Heart left ventricle (tissue), 16 donors: ENCODE measurements at regions of chr2 and their contacts with region 1.

Region 1: GRCh38 chr2:61426267-61426897 is 44.5 kb downstream of the USP34 start:
- DNase-seq: no peak
- ATAC-seq: peak in 3 of 4 donors; percentile 35 to 75 (median 71)
- H3K4me3 ChIP-seq: no peak overlapping the region
- H3K27ac ChIP-seq: no peak overlapping the region
- H3K4me1 ChIP-seq: peaks cover 1 to 64% (median 27%) of the 10 kb centered on the region in 12 donors
- H3K27me3 ChIP-seq: no peaks in the 10 kb centered on the region
- CTCF ChIP-seq: peak in 10 of 12 donors; percentile 13 to 47 (median 33)
- POLR2A ChIP-seq: no peak

Region 2: DNA sequence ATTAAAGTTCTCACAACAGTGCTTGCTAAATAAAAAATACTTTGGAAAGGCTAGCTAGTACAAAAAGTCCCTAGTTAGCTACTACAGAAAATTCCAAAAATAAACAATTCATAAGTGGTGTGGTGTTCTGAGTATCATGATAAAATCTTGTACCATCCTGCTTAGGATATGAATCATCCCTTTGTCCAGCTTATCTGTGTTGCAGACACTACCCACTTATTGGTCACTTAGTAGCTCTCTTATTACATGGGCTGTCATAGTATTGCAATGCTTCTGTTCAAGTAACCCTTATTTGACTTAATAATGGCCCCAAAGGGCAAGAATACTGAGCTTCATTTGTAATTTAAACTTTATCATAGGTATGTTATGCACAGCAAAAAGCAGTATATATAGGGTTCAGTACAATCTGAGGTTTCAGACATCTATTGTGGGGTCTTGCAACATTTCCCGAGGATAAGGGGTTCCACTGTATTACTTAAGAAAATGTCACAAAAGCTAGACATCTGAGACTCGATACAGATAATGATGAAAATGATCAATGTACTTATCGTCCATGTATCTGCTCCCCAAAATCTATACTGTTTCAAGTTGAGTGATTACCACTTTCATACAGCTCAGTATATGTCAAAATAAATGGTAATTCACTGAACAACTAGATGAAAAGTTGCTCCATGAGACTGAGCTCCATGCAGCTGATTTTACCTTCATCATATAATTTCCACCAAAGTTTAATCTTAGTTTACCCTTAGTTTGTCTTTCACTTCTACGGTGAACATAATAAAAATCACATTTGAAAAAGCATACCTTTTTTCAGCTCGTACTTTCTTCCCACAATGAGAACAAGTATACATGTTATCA is 170.6 kb before region 1 on chr2:
- intact Hi-C with region 1: no loop called
- DNase-seq: no peak
- ATAC-seq: peak in 2 of 4 donors; percentile 75 to 76
- H3K4me3 ChIP-seq: no peak overlapping the region
- H3K27ac ChIP-seq: peak overlapping the region in 2 of 12 donors; percentile 5 to 54
- H3K4me1 ChIP-seq: peaks cover 0 to 12% (median 0%) of the 10 kb centered on the region in 12 donors
- H3K27me3 ChIP-seq: no peaks in the 10 kb centered on the region
- CTCF ChIP-seq: no peak
- POLR2A ChIP-seq: no peak

Region 3: GRCh38 chr2:61460163-61460562 is 33.8 kb after region 1 on chr2:
- intact Hi-C with region 1: loop called in 1 of 10 experiments (anchors 5 kb)
- DNase-seq: no peak
- ATAC-seq: peak in 1 of 4 donors; percentile 37
- H3K4me3 ChIP-seq: no peak overlapping the region
- H3K27ac ChIP-seq: peak overlapping the region in 2 of 12 donors; percentile 1 to 55
- H3K4me1 ChIP-seq: peaks cover 0 to 61% (median 46%) of the 10 kb centered on the region in 12 donors
- H3K27me3 ChIP-seq: no peaks in the 10 kb centered on the region
- CTCF ChIP-seq: no peak
- POLR2A ChIP-seq: no peak

Region 4: GRCh38 chr2:61470965-61471904 is 44.9 kb after region 1 on chr2 and contains the start of gene USP34:
- intact Hi-C with region 1: loop called in 1 of 10 experiments (anchors 5 kb)
- DNase-seq: peak; percentile 96 to 97 (median 97)
- ATAC-seq: peak; percentile 96 to 98 (median 97)
- H3K4me3 ChIP-seq: peak within 1 kb of the TSS; percentile 68 to 99 (median 90)
- H3K27ac ChIP-seq: peak within 1 kb of the TSS; percentile 95 to 100 (median 98)
- H3K4me1 ChIP-seq: peaks cover 2 to 41% (median 26%) of the 10 kb centered on the region in 12 donors
- H3K27me3 ChIP-seq: no peaks in the 10 kb centered on the region
- CTCF ChIP-seq: no peak
- POLR2A ChIP-seq: peak in 1 of 2 donors; percentile 85
- total RNA-seq, gene USP34: 48.5 to 82.8 (median 61.9) TPM